Natural killer cell (primary cell): ENCODE measurements at regions of chr9 and their contacts with region 1.

Region 1: DNA sequence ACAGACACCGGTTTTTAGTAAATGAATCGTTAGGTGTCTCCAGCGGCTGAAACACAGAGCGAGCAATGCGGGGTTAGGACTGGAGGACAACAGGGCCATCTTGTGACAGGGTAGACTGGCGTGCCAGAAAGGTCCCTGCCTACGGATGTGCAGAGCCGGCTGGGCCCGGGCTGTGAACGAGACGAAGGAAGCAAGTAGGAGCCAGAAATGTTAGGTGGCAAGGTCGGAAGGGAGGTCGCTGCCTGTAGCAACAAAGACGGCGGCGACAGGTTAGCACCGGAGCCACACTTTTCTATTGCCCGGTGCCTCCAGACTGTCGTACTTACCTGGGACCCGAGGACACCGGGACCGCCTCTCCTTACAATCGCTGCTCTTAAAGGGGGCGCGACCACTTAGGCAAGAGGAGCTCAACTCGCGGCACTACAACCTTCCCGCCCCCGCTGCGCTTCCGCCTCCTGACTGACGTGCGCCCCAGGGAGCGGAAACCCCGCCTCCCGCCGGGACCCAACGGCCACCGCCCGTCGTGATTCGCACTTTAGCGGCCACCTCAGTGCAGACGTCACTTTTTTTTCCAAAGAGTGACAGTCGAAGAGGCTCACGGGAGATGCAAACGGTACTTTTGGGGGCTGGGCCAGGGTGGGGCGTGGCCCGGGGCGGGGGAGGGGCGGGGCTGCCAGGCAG is at the start of gene INIP:
- DNase-seq: peak; percentile 94 to 99
- ATAC-seq: peak; percentile 91 to 97 (median 91)
- H3K4me3 ChIP-seq: peak within 1 kb of the TSS; percentile 65
- H3K4me3 Mint-ChIP-seq: peak within 1 kb of the TSS; percentile 99
- H3K27ac ChIP-seq: peak within 1 kb of the TSS; percentile 84
- H3K27ac Mint-ChIP-seq: peak within 1 kb of the TSS; percentile 99 to 100
- H3K4me1 ChIP-seq: peaks cover 13% of the 10 kb centered on the region
- H3K4me1 Mint-ChIP-seq: peaks cover 19 to 20% of the 10 kb centered on the region in 2 donors
- H3K27me3 ChIP-seq: no peaks in the 10 kb centered on the region
- H3K27me3 Mint-ChIP-seq: peaks cover 0 to 4% of the 10 kb centered on the region in 2 donors
- CTCF ChIP-seq: no peak
- total RNA-seq, gene INIP: 9.9 to 16.7 (median 16.4) TPM

Region 2: DNA sequence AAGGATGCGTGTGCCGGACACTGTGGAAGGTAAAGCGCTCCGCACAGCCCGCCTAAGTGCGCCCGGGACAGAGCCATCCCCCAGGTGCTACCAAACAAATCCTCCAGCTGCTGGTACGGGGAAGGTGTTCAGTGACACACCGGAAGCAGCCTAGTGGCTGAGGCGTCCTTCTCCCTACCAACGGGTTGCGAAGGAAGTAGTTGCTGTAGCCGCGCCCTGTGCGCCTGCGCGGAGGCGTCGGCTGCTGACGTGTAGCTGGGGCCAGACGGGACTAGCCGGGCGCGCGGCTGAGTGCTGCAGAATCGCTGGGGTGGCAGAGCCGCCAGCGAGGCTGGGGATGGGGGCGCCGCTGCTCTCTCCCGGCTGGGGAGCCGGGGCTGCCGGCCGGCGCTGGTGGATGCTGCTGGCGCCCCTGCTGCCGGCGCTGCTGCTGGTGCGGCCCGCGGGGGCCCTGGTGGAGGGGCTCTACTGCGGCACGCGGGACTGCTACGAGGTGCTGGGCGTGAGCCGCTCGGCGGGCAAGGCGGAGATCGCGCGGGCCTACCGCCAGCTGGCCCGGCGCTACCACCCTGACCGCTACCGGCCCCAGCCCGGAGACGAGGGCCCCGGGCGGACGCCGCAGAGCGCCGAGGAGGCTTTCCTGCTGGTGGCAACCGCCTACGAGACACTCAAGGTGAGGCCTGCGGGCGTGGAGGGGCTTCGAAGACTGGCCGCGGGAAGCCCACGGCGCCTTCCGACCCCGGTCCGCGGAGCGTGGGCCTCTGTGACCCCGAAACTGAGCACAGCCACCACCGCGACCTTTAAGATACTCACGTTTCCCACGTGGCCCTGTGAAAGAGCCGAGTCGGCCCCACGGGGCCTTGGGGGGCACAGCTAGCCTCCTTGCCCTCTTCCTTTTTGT is 1086.5 kb before region 1 on chr9 and contains the start of gene DNAJC25:
- intact Hi-C with region 1: loop called (anchors 5 kb)
- DNase-seq: peak; percentile 94 to 99
- ATAC-seq: peak; percentile 91 to 98 (median 96)
- H3K4me3 ChIP-seq: peak within 1 kb of the TSS; percentile 56
- H3K4me3 Mint-ChIP-seq: peak within 1 kb of the TSS; percentile 91
- H3K27ac ChIP-seq: peak within 1 kb of the TSS; percentile 88
- H3K27ac Mint-ChIP-seq: peak within 1 kb of the TSS; percentile 89 to 93
- H3K4me1 ChIP-seq: peaks cover 14% of the 10 kb centered on the region
- H3K4me1 Mint-ChIP-seq: peaks cover 38 to 40% of the 10 kb centered on the region in 2 donors
- H3K27me3 ChIP-seq: no peaks in the 10 kb centered on the region
- H3K27me3 Mint-ChIP-seq: no peaks in the 10 kb centered on the region
- CTCF ChIP-seq: no peak
- total RNA-seq, gene DNAJC25: 5.1 to 5.9 (median 5.7) TPM

Region 3: GRCh38 chr9:112486221-112487007 is 231.4 kb before region 1 on chr9 and contains the start of gene KIAA1958:
- intact Hi-C with region 1: loop called (anchors 5 kb)
- DNase-seq: peak; percentile 69 to 89
- ATAC-seq: peak; percentile 86 to 93 (median 93)
- H3K4me3 ChIP-seq: peak within 1 kb of the TSS; percentile 91
- H3K4me3 Mint-ChIP-seq: peak within 1 kb of the TSS; percentile 98
- H3K27ac ChIP-seq: peak within 1 kb of the TSS; percentile 75
- H3K27ac Mint-ChIP-seq: peak within 1 kb of the TSS; percentile 86 to 91
- H3K4me1 ChIP-seq: peaks cover 9% of the 10 kb centered on the region
- H3K4me1 Mint-ChIP-seq: peaks cover 19 to 20% of the 10 kb centered on the region in 2 donors
- H3K27me3 ChIP-seq: no peaks in the 10 kb centered on the region
- H3K27me3 Mint-ChIP-seq: no peaks in the 10 kb centered on the region
- CTCF ChIP-seq: no peak
- total RNA-seq, gene KIAA1958: 5.4 to 6.1 (median 5.5) TPM

Region 4: GRCh38 chr9:112670991-112671625 is 46.7 kb before region 1 on chr9:
- intact Hi-C with region 1: no loop called
- DNase-seq: no peak
- ATAC-seq: no peak
- H3K4me3 ChIP-seq: no peak overlapping the region
- H3K4me3 Mint-ChIP-seq: no peak overlapping the region
- H3K27ac ChIP-seq: no peak overlapping the region
- H3K27ac Mint-ChIP-seq: no peak overlapping the region
- H3K4me1 ChIP-seq: no peaks in the 10 kb centered on the region
- H3K4me1 Mint-ChIP-seq: no peaks in the 10 kb centered on the region
- H3K27me3 ChIP-seq: no peaks in the 10 kb centered on the region
- H3K27me3 Mint-ChIP-seq: peaks cover 0 to 6% of the 10 kb centered on the region in 2 donors
- CTCF ChIP-seq: no peak

Region 5: DNA sequence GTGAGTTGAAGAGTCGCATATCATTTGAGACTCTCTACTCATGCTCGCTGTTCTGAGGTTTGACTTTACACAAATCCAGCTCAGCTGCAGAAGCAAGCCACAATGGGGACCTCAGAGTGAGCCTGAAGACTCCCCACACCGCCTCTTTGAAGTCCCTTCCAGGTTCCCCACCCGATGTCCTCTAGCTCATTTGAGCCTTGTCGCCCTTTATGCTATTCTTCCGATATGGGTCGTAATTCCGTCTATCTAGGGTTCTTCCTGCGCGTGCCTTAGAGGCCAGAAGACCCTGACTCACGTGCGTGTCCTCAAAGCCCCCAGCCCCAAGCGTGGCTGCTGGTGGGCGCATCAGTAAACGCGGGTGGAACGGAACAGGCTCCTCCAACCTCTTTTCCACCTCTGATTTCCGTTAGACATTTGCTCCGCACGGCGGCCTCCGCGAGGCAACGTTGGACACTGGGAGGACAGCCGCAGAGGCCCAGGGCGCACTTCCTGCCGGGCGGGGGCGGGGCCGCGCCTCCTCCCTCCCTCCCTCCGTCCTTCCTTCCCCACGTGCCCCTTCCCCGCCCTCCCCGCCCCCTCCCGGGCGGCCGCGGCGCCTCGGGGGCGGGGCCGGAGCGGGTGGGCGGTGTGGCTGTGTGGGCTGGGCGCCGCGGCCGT is 32.4 kb after region 1 on chr9 and contains the start of gene SNX30:
- intact Hi-C with region 1: loop called (anchors 1 kb)
- DNase-seq: peak; percentile 75 to 89
- ATAC-seq: peak; percentile 79 to 95 (median 89)
- H3K4me3 ChIP-seq: peak within 1 kb of the TSS; percentile 64
- H3K4me3 Mint-ChIP-seq: peak within 1 kb of the TSS; percentile 91
- H3K27ac ChIP-seq: peak within 1 kb of the TSS; percentile 78
- H3K27ac Mint-ChIP-seq: peak within 1 kb of the TSS; percentile 85 to 89
- H3K4me1 ChIP-seq: peaks cover 47% of the 10 kb centered on the region
- H3K4me1 Mint-ChIP-seq: peaks cover 53 to 59% of the 10 kb centered on the region in 2 donors
- H3K27me3 ChIP-seq: no peaks in the 10 kb centered on the region
- H3K27me3 Mint-ChIP-seq: no peaks in the 10 kb centered on the region
- CTCF ChIP-seq: no peak
- total RNA-seq, gene SNX30: 8.5 to 10.5 (median 9.3) TPM

Region 6: DNA sequence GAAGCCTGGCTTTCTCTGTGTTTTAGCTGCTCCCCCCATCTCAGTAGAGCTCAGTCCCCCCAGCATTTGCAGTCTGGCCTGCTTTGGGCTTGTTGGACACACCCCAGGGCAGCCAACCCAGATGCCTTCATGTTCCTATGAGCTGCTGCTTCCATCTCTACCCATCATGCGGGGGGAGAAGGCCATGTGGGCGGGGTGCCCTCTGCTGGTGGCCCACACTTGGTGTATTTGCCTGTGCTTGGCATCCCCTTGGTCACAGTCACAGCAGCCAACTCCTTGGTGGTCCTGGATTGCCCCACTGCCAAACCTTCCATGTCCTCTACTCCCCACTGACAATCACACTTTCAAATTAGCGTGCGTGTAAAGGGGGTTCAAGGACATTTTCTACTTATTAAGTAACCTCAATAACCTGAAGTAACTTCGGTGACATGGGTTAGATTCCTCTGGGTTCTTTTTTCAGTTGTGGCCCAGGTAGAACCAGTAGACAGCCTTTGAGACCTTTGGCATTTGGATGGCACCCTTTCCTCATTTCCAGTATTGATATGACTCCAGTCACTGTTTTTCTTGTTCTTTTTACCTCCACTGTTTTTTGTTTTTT is 75.5 kb after region 1 on chr9:
- intact Hi-C with region 1: loop called (anchors 5 kb)
- DNase-seq: peak; percentile 75 to 87
- ATAC-seq: peak; percentile 87 to 100 (median 98)
- H3K4me3 ChIP-seq: no peak overlapping the region
- H3K4me3 Mint-ChIP-seq: no peak overlapping the region
- H3K27ac ChIP-seq: no peak overlapping the region
- H3K27ac Mint-ChIP-seq: no peak overlapping the region
- H3K4me1 ChIP-seq: peaks cover 4% of the 10 kb centered on the region
- H3K4me1 Mint-ChIP-seq: peaks cover 5 to 17% of the 10 kb centered on the region in 2 donors
- H3K27me3 ChIP-seq: no peaks in the 10 kb centered on the region
- H3K27me3 Mint-ChIP-seq: no peaks in the 10 kb centered on the region
- CTCF ChIP-seq: peak; percentile 75

Region 7: GRCh38 chr9:112887381-112887780 is 169.6 kb after region 1 on chr9:
- intact Hi-C with region 1: no loop called
- DNase-seq: no peak
- ATAC-seq: peak in 1 of 3 donors; percentile 38
- H3K4me3 ChIP-seq: no peak overlapping the region
- H3K4me3 Mint-ChIP-seq: no peak overlapping the region
- H3K27ac ChIP-seq: no peak overlapping the region
- H3K27ac Mint-ChIP-seq: no peak overlapping the region
- H3K4me1 ChIP-seq: peaks cover 8% of the 10 kb centered on the region
- H3K4me1 Mint-ChIP-seq: no peaks in the 10 kb centered on the region
- H3K27me3 ChIP-seq: peaks cover 8% of the 10 kb centered on the region
- H3K27me3 Mint-ChIP-seq: peaks cover 14 to 25% of the 10 kb centered on the region in 2 donors
- CTCF ChIP-seq: no peak

Region 8: GRCh38 chr9:112997236-112997941 is 279.6 kb after region 1 on chr9:
- intact Hi-C with region 1: no loop called
- DNase-seq: no peak
- ATAC-seq: no peak
- H3K4me3 ChIP-seq: no peak overlapping the region
- H3K4me3 Mint-ChIP-seq: no peak overlapping the region
- H3K27ac ChIP-seq: no peak overlapping the region
- H3K27ac Mint-ChIP-seq: no peak overlapping the region
- H3K4me1 ChIP-seq: no peaks in the 10 kb centered on the region
- H3K4me1 Mint-ChIP-seq: no peaks in the 10 kb centered on the region
- H3K27me3 ChIP-seq: no peaks in the 10 kb centered on the region
- H3K27me3 Mint-ChIP-seq: no peaks in the 10 kb centered on the region
- CTCF ChIP-seq: no peak